Activated CD4-positive, alpha-beta memory T cell treated with anti-CD3 and anti-CD28 coated beads, Interleukin-2, amount 10 ng/mL, durations not matched to agents 7 days and 5 days (primary cell): ENCODE measurements at regions of chr3 and their contacts with region 1.

Region 1: GRCh38 chr3:141452036-141452435 is 34.8 kb upstream of the RASA2 start:
- DNase-seq: peak; percentile 57
- H3K4me3 Mint-ChIP-seq: no peak overlapping the region
- H3K27ac Mint-ChIP-seq: no peak overlapping the region
- H3K4me1 Mint-ChIP-seq: peaks cover 9% of the 10 kb centered on the region
- H3K27me3 Mint-ChIP-seq: no peaks in the 10 kb centered on the region

Region 2: GRCh38 chr3:141311496-141312353 is 140.3 kb before region 1 on chr3:
- CTCF ChIA-PET with region 1: interaction called, 374 read pairs
- POLR2A ChIA-PET with region 1: interaction called, 31 read pairs
- DNase-seq: peak; percentile 99
- H3K4me3 Mint-ChIP-seq: peak overlapping the region; percentile 93
- H3K27ac Mint-ChIP-seq: peak overlapping the region; percentile 86
- H3K4me1 Mint-ChIP-seq: peaks cover 58% of the 10 kb centered on the region
- H3K27me3 Mint-ChIP-seq: no peaks in the 10 kb centered on the region

Region 3: GRCh38 chr3:141370065-141370533 is 81.9 kb before region 1 on chr3:
- CTCF ChIA-PET with region 1: interaction called, 12 read pairs
- POLR2A ChIA-PET with region 1: interaction called, 3 read pairs
- DNase-seq: peak; percentile 65
- H3K4me3 Mint-ChIP-seq: no peak overlapping the region
- H3K27ac Mint-ChIP-seq: no peak overlapping the region
- H3K4me1 Mint-ChIP-seq: peaks cover 38% of the 10 kb centered on the region
- H3K27me3 Mint-ChIP-seq: no peaks in the 10 kb centered on the region

Region 4: DNA sequence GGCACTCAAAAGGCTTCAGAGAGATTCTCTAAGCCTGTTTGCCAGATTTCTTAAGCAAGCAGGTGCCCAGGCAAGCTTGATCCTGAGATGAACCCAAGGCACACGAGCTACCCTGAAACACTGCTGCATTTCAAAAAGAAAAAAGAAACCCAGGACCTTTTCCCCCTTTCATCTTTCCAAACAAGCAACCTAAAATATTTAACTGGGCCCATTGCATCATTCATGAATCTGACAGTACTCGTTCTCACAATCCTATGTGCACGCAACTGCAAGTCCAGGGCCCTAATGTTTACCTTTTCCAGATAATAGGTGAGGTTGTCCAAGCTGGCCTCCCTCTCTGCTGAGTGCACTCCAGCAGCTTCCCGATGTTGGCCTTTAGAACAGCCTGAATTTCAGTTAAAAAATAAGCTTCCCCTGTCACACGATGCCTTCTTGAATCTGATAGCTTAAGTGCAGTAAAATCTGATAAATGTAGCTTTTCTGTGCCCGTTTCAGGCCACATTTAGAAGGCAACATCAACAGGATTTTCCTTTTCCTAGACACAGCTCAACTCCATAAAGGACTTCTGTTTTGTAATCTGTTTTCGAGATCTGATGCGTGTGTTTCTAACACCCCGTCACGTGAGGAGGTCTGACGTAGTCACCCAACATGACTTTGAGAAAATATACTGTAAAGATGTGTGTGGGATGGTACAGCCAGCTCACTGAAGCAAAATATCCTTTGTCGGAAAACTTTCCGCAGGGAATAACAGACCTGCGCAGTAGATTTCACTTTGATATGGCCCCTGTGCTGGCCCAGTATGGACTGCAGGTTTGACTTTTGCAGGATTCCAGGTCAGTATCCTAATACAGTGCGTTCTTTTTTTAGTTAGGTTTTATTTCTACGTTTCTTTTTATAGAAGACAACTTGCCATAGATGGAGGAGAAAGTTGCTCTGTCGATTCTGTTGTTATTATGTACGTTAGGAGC is 20.3 kb before region 1 on chr3:
- CTCF ChIA-PET with region 1: interaction called, 11 read pairs
- POLR2A ChIA-PET with region 1: interaction called, 3 read pairs
- DNase-seq: no peak
- H3K4me3 Mint-ChIP-seq: no peak overlapping the region
- H3K27ac Mint-ChIP-seq: no peak overlapping the region
- H3K4me1 Mint-ChIP-seq: peaks cover 8% of the 10 kb centered on the region
- H3K27me3 Mint-ChIP-seq: no peaks in the 10 kb centered on the region